A549 (cell line): ENCODE measurements at regions of chr11 and their contacts with region 1.

Region 1: GRCh38 chr11:66069715-66070603 is at the start of gene PACS1:
- DNase-seq: peak; percentile 70 to 74
- ATAC-seq: peak; percentile 63 to 65
- H3K4me3 ChIP-seq: peak within 1 kb of the TSS; percentile 87
- H3K27ac ChIP-seq: peak within 1 kb of the TSS; percentile 95 to 98
- H3K4me1 ChIP-seq: peaks cover 32% of the 10 kb centered on the region
- CTCF ChIP-seq: no peak; the same call in 2 of the 3 replicates
- EP300 ChIP-seq: no peak
- POLR2A ChIP-seq: peak; percentile 82
- RAD21 ChIP-seq: no peak
- polyA plus RNA-seq, gene PACS1: 48.2 and 71.7 TPM in 2 replicates

Region 2: DNA sequence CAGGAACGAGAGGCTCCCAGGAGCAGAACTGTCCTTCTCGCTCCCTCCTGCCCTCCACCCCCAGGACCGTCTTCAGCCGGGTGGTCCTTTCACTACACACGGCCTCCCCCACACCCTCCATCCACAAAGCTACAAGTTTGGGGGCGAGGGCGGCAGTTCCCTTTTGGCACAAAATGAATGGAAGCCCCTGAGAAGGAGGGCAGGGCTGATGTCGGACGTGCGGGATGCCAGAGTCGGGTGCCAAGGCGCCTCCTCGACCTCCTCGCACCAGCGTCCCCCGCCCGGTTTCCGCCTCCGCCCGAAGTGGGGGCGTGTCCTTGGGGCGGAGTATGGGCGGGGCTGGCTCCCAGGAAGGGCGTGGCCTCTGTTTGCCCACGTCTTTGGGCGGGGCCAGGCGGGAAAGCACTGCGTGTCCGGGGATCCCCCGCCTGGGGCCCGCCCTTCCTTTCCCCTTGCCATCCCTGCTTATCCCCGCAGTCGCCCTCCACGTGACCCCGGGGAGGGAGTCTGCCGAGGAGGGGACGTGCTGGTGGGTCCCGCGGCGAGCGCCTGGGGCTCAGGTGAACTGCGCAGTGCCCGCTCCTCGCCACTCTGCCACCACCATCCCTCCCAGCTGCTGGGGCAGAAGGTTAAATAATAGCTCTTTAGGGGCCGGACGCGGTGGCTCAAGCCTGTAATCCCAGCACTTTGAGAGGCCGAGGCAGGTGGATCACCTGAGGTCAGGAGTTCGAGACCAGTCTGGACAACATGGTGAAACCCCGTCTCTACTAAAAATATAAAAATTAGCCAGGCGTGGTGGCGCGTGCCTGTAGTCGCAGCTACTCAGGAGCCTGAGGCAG is 196.4 kb before region 1 on chr11:
- CTCF ChIA-PET with region 1: no interaction called
- POLR2A ChIA-PET with region 1: no interaction called
- DNase-seq: peak; percentile 92 to 95
- ATAC-seq: peak; percentile 60 to 79
- H3K4me3 ChIP-seq: peak overlapping the region; percentile 55
- H3K27ac ChIP-seq: peak overlapping the region; percentile 82 to 84
- H3K4me1 ChIP-seq: peaks cover 6% of the 10 kb centered on the region
- CTCF ChIP-seq: no peak
- EP300 ChIP-seq: no peak
- POLR2A ChIP-seq: peak; percentile 86
- RAD21 ChIP-seq: no peak

Region 3: GRCh38 chr11:65958774-65959420 is 111.1 kb before region 1 on chr11:
- CTCF ChIA-PET with region 1: no interaction called
- POLR2A ChIA-PET with region 1: no interaction called
- DNase-seq: no peak
- ATAC-seq: no peak
- H3K4me3 ChIP-seq: no peak overlapping the region
- H3K27ac ChIP-seq: no peak overlapping the region
- H3K4me1 ChIP-seq: peaks cover 12% of the 10 kb centered on the region; the same call in 2 of the 3 replicates
- CTCF ChIP-seq: no peak
- EP300 ChIP-seq: no peak
- POLR2A ChIP-seq: no peak
- RAD21 ChIP-seq: no peak

Region 4: GRCh38 chr11:66035653-66036333 is 34.2 kb before region 1 on chr11:
- CTCF ChIA-PET with region 1: interaction called, 13 read pairs
- POLR2A ChIA-PET with region 1: no interaction called
- DNase-seq: no peak
- ATAC-seq: peak; percentile 44 to 60; a peak in 4 of 6 replicates
- H3K4me3 ChIP-seq: no peak overlapping the region
- H3K27ac ChIP-seq: no peak overlapping the region
- H3K4me1 ChIP-seq: no peaks in the 10 kb centered on the region
- CTCF ChIP-seq: no peak
- EP300 ChIP-seq: no peak
- POLR2A ChIP-seq: no peak
- RAD21 ChIP-seq: peak in 1 of 2 experiments; percentile 3; a peak in 1 of 5 replicates

Region 5: DNA sequence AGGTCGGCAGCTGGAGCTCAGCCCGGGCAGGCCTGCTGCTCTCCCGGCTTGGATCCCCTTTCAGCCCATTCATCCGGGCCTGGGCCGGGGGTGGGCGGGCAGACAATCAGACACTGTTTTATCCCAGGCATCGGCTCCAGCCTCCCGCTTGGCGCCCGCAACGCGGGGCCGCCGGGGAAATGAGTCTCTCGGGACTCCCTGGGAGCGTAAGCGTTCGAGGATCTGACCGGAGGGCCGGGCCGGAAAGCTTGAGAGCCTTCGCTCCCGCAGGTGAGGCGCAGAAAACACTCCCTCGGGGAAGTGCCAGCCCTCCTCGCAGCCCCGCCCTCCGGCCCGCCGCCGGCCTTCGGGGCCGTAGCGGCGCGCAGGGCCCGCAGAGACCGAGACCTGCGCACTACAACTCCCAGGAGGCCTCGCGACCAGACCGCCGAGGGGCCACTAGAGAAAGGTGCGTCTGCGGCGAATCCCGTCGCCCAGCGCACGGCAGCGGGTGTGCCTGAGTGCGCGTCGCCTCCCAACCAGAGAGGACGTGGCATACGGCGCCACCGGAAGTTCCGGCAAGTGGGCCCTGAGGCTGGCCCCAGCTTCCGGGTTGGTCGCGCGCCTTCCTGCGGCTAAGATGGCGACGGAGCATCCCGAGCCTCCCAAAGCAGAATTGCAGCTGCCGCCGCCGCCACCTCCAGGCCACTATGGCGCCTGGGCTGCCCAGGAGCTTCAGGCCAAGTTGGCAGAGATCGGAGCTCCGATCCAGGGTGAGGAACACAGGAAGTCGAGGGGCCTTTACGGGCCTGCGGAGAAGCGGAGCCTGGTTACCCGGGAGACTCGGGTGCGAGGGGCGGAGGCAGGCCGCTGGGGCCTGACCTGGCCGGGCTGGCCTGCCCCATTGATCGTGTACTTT is 17.9 kb before region 1 on chr11 and contains the start of gene SF3B2:
- CTCF ChIA-PET with region 1: interaction called, 233 read pairs
- POLR2A ChIA-PET with region 1: interaction called, 11 read pairs
- DNase-seq: peak; percentile 96 to 99
- ATAC-seq: peak; percentile 97 to 99
- H3K4me3 ChIP-seq: peak within 1 kb of the TSS; percentile 89
- H3K27ac ChIP-seq: peak within 1 kb of the TSS; percentile 92 to 93
- H3K4me1 ChIP-seq: peaks cover 21% of the 10 kb centered on the region
- CTCF ChIP-seq: no peak
- EP300 ChIP-seq: no peak
- POLR2A ChIP-seq: peak; percentile 59
- RAD21 ChIP-seq: no peak
- polyA plus RNA-seq, gene SF3B2: 107 and 108 TPM in 2 replicates

Region 6: DNA sequence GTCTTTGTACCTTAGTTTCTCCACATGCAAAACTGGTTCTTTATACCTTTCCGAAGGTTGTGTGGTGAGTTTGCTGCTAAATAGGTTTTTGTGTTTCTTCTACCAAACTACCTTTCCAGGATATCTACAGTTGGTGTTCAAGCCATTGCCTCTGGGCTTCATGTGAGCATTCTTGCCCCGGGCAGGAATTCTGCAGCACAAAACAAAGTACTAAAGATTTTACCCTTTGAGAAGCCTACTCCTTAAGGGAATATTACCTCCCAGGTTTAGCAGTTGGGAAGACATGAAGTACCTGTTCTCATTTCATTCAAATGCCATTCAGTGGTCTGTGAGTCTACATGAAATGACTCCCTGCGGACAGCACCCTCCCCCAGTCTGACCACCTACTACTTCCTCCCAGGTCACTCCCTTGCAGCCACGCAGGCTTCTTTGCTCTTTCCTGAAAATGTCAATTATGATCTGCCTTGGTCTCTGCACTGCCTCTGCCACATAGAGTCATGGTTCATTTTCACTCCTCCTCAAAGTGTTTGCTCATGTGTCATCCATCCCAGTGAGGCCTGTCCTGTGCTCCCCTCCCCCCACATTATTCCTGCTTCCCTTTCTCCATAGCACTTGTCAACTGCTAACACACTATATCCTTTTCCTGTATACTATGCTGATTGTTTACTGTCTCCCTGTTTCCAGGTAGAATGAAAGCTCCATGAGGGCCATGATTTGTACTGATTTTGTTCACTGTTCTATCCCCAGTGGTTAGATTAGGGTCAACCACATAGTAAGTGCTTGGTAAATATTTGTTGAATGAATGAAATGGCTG is 37.0 kb after region 1 on chr11:
- CTCF ChIA-PET with region 1: interaction called, 37 read pairs
- POLR2A ChIA-PET with region 1: no interaction called
- DNase-seq: peak in 1 of 2 experiments; percentile 23
- ATAC-seq: peak in 1 of 2 experiments; percentile 35; a peak in 3 of 6 replicates
- H3K4me3 ChIP-seq: no peak overlapping the region
- H3K27ac ChIP-seq: peak overlapping the region; percentile 93; a peak in 5 of 6 replicates
- H3K4me1 ChIP-seq: peaks cover 96% of the 10 kb centered on the region
- CTCF ChIP-seq: no peak
- EP300 ChIP-seq: no peak
- POLR2A ChIP-seq: no peak
- RAD21 ChIP-seq: no peak

Region 7: DNA sequence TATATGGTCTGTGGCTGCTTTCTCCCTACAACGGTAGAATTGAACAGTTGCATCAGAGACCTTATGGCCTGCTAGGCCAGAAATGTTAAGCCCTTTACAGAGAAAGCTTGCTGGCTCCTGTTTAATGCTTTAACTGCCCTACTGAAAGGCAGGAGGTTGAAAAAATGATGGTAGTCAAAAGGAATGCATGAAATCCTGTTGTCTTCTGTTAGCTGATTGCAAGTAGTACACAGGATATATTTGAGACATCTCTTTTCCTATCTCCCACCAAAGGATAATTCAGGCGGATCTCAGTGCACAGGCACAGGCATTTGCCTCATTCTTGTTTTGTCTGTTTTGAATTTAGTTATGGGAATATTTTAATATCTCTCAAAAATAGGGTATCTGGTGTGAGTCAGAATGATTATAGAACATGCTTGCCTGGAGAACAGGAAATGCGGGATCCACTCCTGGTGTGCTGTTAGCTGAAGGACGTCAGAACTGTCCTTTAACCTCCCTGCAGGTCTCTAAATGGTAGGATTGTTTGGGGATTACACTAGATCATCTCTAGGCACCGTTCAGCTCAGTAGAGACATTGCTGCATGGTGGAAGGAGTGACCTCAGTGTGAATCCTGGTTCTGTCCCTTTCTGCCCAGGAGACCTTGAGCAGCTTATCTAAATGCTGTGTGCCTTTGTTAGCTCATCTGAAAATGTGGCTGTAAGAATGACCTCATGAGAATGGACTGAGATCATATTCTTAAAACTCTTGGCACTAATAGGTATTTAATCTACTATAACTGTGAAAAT is 49.6 kb after region 1 on chr11:
- CTCF ChIA-PET with region 1: interaction called, 33 read pairs
- POLR2A ChIA-PET with region 1: interaction called, 4 read pairs
- DNase-seq: peak; percentile 60 to 89
- ATAC-seq: peak; percentile 89 to 91
- H3K4me3 ChIP-seq: peak overlapping the region; percentile 6; the same call in 1 of the 3 replicates
- H3K27ac ChIP-seq: peak overlapping the region; percentile 93 to 94
- H3K4me1 ChIP-seq: peaks cover 86% of the 10 kb centered on the region
- CTCF ChIP-seq: no peak
- EP300 ChIP-seq: peak; percentile 44 to 73; a peak in 3 of 5 replicates
- POLR2A ChIP-seq: no peak
- RAD21 ChIP-seq: peak in 1 of 2 experiments; percentile 3; a peak in 2 of 5 replicates

Region 8: GRCh38 chr11:66142370-66143263 is 72.7 kb after region 1 on chr11:
- CTCF ChIA-PET with region 1: interaction called, 112 read pairs
- POLR2A ChIA-PET with region 1: no interaction called
- DNase-seq: peak; percentile 70 to 77
- ATAC-seq: peak; percentile 76 to 87
- H3K4me3 ChIP-seq: 0 out of 3 replicates have a peak overlapping the region, but pooled peaks have one; percentile 9
- H3K27ac ChIP-seq: peak overlapping the region; percentile 80 to 93
- H3K4me1 ChIP-seq: peaks cover 63% of the 10 kb centered on the region
- CTCF ChIP-seq: no peak; the same call in 2 of the 3 replicates
- EP300 ChIP-seq: no peak; a peak in 1 of 5 replicates
- POLR2A ChIP-seq: no peak
- RAD21 ChIP-seq: no peak; a peak in 1 of 5 replicates

Region 9: GRCh38 chr11:66222358-66223149 is 152.6 kb after region 1 on chr11:
- CTCF ChIA-PET with region 1: interaction called, 12 read pairs
- POLR2A ChIA-PET with region 1: no interaction called
- DNase-seq: peak; percentile 82 to 95
- ATAC-seq: peak; percentile 84 to 93
- H3K4me3 ChIP-seq: no peak overlapping the region
- H3K27ac ChIP-seq: peak overlapping the region; percentile 18 to 47; a peak in 4 of 6 replicates
- H3K4me1 ChIP-seq: peaks cover 14% of the 10 kb centered on the region; the same call in 1 of the 3 replicates
- CTCF ChIP-seq: peak; percentile 99
- EP300 ChIP-seq: no peak
- POLR2A ChIP-seq: no peak
- RAD21 ChIP-seq: peak; percentile 75 to 88

Region 10: GRCh38 chr11:66339163-66339675 is 269.3 kb after region 1 on chr11:
- CTCF ChIA-PET with region 1: no interaction called
- POLR2A ChIA-PET with region 1: no interaction called
- DNase-seq: no peak
- ATAC-seq: no peak
- H3K4me3 ChIP-seq: no peak overlapping the region
- H3K27ac ChIP-seq: no peak overlapping the region
- H3K4me1 ChIP-seq: peaks cover 37% of the 10 kb centered on the region
- CTCF ChIP-seq: no peak
- EP300 ChIP-seq: no peak
- POLR2A ChIP-seq: no peak
- RAD21 ChIP-seq: no peak